ENCODE measurements at regions of chr1 and their contacts with region 1.

Region 1: DNA sequence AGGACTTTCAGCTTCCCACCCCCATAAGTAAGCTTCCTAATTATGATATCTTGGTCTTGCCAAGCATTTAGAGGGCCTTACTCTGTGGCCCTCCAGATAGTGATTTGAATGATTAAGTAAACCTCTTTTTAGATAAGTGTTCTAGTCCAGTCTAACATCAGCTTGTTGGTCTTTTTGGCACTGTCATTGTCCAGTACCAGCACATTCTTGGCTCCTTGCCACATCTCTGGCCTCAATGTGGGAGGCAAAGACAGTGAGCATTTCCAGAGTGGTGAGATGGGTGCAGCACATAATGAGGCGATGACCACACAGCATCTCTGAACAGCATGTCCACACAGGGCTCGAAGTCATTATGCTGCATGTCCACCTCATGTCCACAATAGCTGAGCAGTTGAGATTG is 6.1 kb downstream of the CAPZA1 start:
- DNase-seq: no peak
- H3K4me3 ChIP-seq: no peak overlapping the region
- H3K27ac ChIP-seq: no peak overlapping the region
- H3K4me1 ChIP-seq: peaks cover 57 to 86% (median 81%) of the 10 kb centered on the region in 4 donors
- H3K27me3 ChIP-seq: no peaks in the 10 kb centered on the region
- CTCF ChIP-seq: no peak
- EP300 ChIP-seq: no peak
- POLR2A ChIP-seq: no peak

Region 2: DNA sequence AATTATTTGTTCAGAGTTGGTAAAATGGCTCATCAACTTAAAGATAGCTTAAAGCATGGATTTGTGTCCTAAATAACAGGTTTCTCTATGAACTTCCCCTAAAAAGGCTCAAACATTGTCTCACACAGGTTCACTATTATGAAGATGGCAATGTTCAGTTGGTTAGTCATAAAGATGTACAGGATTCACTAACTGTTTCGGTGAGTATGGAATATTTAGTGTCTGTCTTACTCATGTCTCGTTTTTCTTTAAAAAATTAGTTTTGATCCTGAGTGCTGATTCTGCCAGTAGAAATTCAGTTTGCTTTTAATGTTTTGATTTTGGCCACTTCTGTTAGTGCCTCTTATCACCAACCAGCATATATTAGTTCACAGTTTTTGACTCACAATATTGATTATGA is 41.2 kb after region 1 on chr1:
- intact Hi-C with region 1: loop called (anchors 5 kb)
- DNase-seq: no peak
- H3K4me3 ChIP-seq: no peak overlapping the region
- H3K27ac ChIP-seq: no peak overlapping the region
- H3K4me1 ChIP-seq: no peaks in the 10 kb centered on the region
- H3K27me3 ChIP-seq: no peaks in the 10 kb centered on the region
- CTCF ChIP-seq: no peak
- EP300 ChIP-seq: no peak
- POLR2A ChIP-seq: no peak

Region 3: GRCh38 chr1:112722601-112723510 is 97.2 kb after region 1 on chr1:
- intact Hi-C with region 1: no loop called
- DNase-seq: no peak
- H3K4me3 ChIP-seq: peak overlapping the region; percentile 28 to 44 (median 31)
- H3K27ac ChIP-seq: no peak overlapping the region
- H3K4me1 ChIP-seq: peaks cover 5 to 23% (median 18%) of the 10 kb centered on the region in 4 donors
- H3K27me3 ChIP-seq: peaks cover 0 to 32% (median 0%) of the 10 kb centered on the region in 4 donors
- CTCF ChIP-seq: no peak
- EP300 ChIP-seq: no peak
- POLR2A ChIP-seq: no peak

Measured in esophagus muscularis mucosa (tissue), 4 donors.